Psoas muscle (tissue), 8 donors: ENCODE measurements at regions of chr14 and their contacts with region 1.

Region 1: DNA sequence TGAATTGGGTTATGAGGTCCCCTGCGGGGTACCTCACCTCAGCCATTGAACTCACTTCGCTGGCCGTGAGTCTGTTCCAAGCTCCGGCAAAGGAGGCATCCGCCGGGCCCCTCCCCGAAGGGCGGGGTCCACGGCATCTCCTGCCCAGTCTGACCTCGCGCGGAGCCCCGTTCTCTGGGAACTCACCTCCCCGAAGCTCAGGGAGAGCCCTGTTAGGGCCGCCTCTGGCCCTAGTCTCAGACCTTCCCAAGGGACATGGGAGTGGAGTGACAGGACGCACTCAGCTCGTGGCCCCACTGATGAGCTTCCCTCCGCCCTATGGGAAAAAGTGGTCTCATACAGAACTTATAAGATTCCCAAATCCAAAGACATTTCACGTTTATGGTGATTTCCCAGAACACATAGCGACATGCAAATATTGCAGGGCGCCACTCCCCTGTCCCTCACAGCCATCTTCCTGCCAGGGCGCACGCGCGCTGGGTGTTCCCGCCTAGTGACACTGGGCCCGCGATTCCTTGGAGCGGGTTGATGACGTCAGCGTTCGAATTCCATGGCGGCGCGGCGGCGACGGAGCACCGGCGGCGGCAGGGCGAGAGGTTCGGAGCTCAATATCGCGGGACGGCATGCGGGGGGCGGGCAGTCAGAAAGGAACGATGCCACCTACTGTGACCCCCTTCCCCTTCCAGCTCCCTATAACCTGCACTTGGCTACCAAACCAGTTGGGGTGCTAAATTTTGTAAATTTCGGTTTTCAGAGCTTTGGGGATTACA is at the start of gene PARP2:
- DNase-seq: peak; percentile 97 to 99
- ATAC-seq: peak; percentile 96 to 97 (median 97)
- H3K4me3 ChIP-seq: peak within 1 kb of the TSS; percentile 90
- H3K27ac ChIP-seq: peak within 1 kb of the TSS; percentile 93
- H3K4me1 ChIP-seq: peaks cover 4% of the 10 kb centered on the region
- H3K27me3 ChIP-seq: no peaks in the 10 kb centered on the region
- CTCF ChIP-seq: peak; percentile 8
- total RNA-seq, gene PARP2: 10.2 to 17.4 (median 14.7) TPM

Region 2: GRCh38 chr14:20461274-20462001 is 118.2 kb after region 1 on chr14 and contains the start of gene PIP4P1:
- intact Hi-C with region 1: loop called in 1 of 2 experiments (anchors 5 kb)
- DNase-seq: peak; percentile 99
- ATAC-seq: peak; percentile 95 to 96 (median 96)
- H3K4me3 ChIP-seq: peak within 1 kb of the TSS; percentile 87
- H3K27ac ChIP-seq: peak within 1 kb of the TSS; percentile 95
- H3K4me1 ChIP-seq: peaks cover 16% of the 10 kb centered on the region
- H3K27me3 ChIP-seq: no peaks in the 10 kb centered on the region
- CTCF ChIP-seq: no peak
- total RNA-seq, gene PIP4P1: 15.6 to 29.7 (median 20.7) TPM

Region 3: DNA sequence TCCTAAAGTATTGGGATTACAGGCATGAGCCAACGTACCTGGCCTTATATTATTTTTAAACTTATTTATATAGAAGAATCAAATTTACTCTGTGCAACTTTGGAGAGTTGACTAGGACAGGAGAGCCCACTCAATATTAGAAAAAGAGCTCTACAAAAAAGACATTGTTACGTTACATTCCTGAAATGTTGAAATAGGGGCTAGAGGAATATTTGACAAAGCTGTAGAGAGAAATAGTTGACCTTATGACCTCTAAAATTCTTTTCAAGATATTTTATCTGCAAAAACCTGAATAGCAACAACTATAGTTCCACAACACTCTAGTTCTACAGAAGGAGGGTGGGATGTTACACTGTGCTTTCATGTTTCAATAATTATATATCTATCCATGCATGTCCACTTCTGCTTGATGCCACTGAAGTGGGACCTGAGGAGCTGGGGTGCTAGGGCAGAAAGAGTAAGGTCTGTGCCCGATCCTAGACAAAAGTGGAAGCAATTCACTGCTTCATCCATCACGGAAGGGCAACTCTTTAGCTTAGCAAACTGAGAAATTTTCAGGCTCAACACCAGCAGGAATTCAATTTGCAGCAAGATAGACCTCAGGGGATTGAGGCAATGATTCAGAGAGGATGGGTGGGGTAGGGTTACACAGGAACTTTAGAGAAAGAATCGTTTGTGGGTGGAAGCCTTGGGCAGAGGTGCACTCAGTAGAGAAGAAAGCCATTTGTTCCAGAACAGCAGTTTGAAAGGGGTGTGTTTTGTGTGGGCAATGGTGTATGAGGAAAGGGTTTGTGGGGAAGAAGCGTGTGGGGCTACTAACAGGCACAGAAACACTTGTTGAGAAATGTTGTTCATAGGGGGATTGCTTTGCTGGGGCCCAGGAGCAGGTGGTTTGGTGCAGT is 146.1 kb after region 1 on chr14:
- intact Hi-C with region 1: no loop called
- DNase-seq: no peak
- ATAC-seq: no peak
- H3K4me3 ChIP-seq: no peak overlapping the region
- H3K27ac ChIP-seq: no peak overlapping the region
- H3K4me1 ChIP-seq: no peaks in the 10 kb centered on the region
- H3K27me3 ChIP-seq: peaks cover 0 to 6% (median 0%) of the 10 kb centered on the region in 3 donors
- CTCF ChIP-seq: no peak